Left cardiac atrium (tissue), 4 donors: ENCODE measurements at regions of chr17 and their contacts with region 1.

Region 1: GRCh38 chr17:63621766-63622519 is at the start of gene MAP3K3:
- DNase-seq: peak; percentile 99
- ATAC-seq: peak; percentile 95 to 97
- total RNA-seq, gene MAP3K3: 38.2 to 45.3 TPM

Region 2: GRCh38 chr17:63549946-63550807 is 71.8 kb before region 1 on chr17 and contains the start of gene DCAF7:
- intact Hi-C with region 1: loop called in 1 of 2 experiments (anchors 5 kb)
- DNase-seq: peak; percentile 99
- ATAC-seq: peak; percentile 98 to 99
- total RNA-seq, gene DCAF7: 43.5 to 49.5 TPM

Region 3: GRCh38 chr17:63714547-63715277 is 92.8 kb after region 1 on chr17:
- intact Hi-C with region 1: no loop called
- DNase-seq: peak; percentile 51
- ATAC-seq: peak; percentile 87 to 93